H1 (cell line): ENCODE measurements at regions of chr2 and their contacts with region 1.

Region 1: GRCh38 chr2:212777020-212777491 is 238.5 kb upstream of the ERBB4 start:
- DNase-seq: no peak
- H3K4me3 ChIP-seq: no peak overlapping the region
- H3K27ac ChIP-seq: no peak overlapping the region
- H3K4me1 ChIP-seq: peaks cover 0 to 2% (median 0%) of the 10 kb centered on the region in 4 experiments; a peak in 1 of 7 replicates
- H3K27me3 ChIP-seq: no peaks in the 10 kb centered on the region
- CTCF ChIP-seq: peak in 1 of 3 experiments; percentile 31; a peak in 2 of 4 replicates
- EP300 ChIP-seq: no peak
- POLR2A ChIP-seq: no peak
- RAD21 ChIP-seq: peak in 1 of 2 experiments; percentile 51; a peak in 3 of 4 replicates

Region 2: GRCh38 chr2:212766919-212767556 is 10.0 kb before region 1 on chr2:
- CTCF ChIA-PET with region 1: interaction called, 10 read pairs
- POLR2A ChIA-PET with region 1: no interaction called
- DNase-seq: no peak
- H3K4me3 ChIP-seq: no peak overlapping the region
- H3K27ac ChIP-seq: no peak overlapping the region
- H3K4me1 ChIP-seq: no peaks in the 10 kb centered on the region
- H3K27me3 ChIP-seq: no peaks in the 10 kb centered on the region
- CTCF ChIP-seq: no peak
- EP300 ChIP-seq: no peak
- POLR2A ChIP-seq: no peak
- RAD21 ChIP-seq: no peak